ENCODE measurements at regions of chr12 and their contacts with region 1.

Region 1: GRCh38 chr12:53159195-53159839 is 21.2 kb upstream of the ZNF740 start:
- DNase-seq: no peak
- H3K4me3 ChIP-seq: no peak overlapping the region
- CTCF ChIP-seq: peak; percentile 98

Region 2: GRCh38 chr12:53079226-53080117 is 79.8 kb before region 1 on chr12 and contains the start of gene SPRYD3:
- CTCF ChIA-PET with region 1: interaction called, 19 read pairs
- POLR2A ChIA-PET with region 1: no interaction called
- DNase-seq: peak; percentile 80
- H3K4me3 ChIP-seq: peak within 1 kb of the TSS; percentile 76
- CTCF ChIP-seq: no peak

Region 3: GRCh38 chr12:53145383-53146260 is 13.7 kb before region 1 on chr12:
- CTCF ChIA-PET with region 1: interaction called, 17 read pairs
- POLR2A ChIA-PET with region 1: no interaction called
- DNase-seq: no peak
- H3K4me3 ChIP-seq: no peak overlapping the region
- CTCF ChIP-seq: no peak

Region 4: GRCh38 chr12:53190108-53190729 is 30.9 kb after region 1 on chr12:
- CTCF ChIA-PET with region 1: interaction called, 40 read pairs
- POLR2A ChIA-PET with region 1: interaction called, 3 read pairs
- DNase-seq: no peak
- H3K4me3 ChIP-seq: no peak overlapping the region
- CTCF ChIP-seq: peak; percentile 92

Region 5: DNA sequence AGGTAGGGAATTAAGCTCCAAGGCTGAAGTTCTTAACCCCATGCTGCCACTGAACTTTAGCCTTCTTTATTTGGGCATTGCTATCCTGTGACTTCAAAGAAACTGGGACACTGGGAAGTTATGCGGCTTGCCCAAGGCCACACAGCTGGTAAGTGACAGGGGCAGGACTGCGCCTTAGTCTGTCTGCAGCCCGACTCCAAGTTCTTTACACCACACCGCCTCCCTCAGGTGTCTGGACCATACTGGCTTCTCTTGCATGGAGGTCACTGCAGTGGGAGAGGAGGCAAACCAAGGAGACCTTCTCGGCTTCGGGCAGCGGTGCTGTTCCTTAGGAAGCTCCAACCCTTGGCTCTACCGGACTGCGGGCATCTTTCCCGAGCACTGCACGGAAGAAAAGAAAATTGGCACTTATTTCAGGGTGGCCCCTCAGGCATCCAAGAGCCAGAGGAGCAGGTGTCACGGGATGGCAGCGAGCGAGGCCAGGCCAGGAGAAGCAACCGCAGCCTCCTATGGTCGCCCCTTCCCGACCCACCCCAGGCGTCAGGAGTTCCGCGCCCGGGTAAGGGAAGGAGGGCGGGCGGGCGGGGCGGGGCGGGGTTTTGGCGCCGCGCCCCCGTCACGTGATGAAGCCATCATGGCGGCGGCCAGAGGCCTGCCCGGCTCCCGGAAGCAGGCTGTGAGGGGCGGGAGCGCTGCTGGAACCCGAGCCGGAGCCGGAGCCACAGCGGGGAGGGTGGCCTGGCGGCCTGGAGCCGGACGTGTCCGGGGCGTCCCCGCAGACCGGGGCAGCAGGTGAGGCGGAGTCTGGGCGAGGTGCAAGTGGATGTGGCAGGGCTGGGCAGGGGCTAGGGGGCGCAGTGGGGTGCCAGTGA is 92.4 kb after region 1 on chr12:
- CTCF ChIA-PET with region 1: interaction called, 10 read pairs
- POLR2A ChIA-PET with region 1: no interaction called
- DNase-seq: no peak
- H3K4me3 ChIP-seq: peak overlapping the region; percentile 88
- CTCF ChIP-seq: peak; percentile 46

Region 6: GRCh38 chr12:53295070-53295890 is 136.0 kb after region 1 on chr12 and contains the start of gene PFDN5:
- CTCF ChIA-PET with region 1: interaction called, 73 read pairs
- POLR2A ChIA-PET with region 1: interaction called, 3 read pairs
- DNase-seq: peak; percentile 51
- H3K4me3 ChIP-seq: peak within 1 kb of the TSS; percentile 93
- CTCF ChIP-seq: peak; percentile 1

Region 7: GRCh38 chr12:53476769-53477209 is 317.5 kb after region 1 on chr12:
- CTCF ChIA-PET with region 1: no interaction called
- POLR2A ChIA-PET with region 1: no interaction called
- DNase-seq: no peak
- H3K4me3 ChIP-seq: no peak overlapping the region
- CTCF ChIP-seq: no peak